HEK293 (cell line): ENCODE measurements at regions of chr17 and their contacts with region 1.

Region 1: GRCh38 chr17:76714822-76715495 is 4.2 kb upstream of the MXRA7 start:
- H3K4me3 ChIP-seq: no peak overlapping the region
- H3K27ac ChIP-seq: no peak overlapping the region
- H3K4me1 ChIP-seq: peaks cover 35% of the 10 kb centered on the region
- CTCF ChIP-seq: peak; percentile 66; the same call in 1 of the 2 replicates

Region 2: DNA sequence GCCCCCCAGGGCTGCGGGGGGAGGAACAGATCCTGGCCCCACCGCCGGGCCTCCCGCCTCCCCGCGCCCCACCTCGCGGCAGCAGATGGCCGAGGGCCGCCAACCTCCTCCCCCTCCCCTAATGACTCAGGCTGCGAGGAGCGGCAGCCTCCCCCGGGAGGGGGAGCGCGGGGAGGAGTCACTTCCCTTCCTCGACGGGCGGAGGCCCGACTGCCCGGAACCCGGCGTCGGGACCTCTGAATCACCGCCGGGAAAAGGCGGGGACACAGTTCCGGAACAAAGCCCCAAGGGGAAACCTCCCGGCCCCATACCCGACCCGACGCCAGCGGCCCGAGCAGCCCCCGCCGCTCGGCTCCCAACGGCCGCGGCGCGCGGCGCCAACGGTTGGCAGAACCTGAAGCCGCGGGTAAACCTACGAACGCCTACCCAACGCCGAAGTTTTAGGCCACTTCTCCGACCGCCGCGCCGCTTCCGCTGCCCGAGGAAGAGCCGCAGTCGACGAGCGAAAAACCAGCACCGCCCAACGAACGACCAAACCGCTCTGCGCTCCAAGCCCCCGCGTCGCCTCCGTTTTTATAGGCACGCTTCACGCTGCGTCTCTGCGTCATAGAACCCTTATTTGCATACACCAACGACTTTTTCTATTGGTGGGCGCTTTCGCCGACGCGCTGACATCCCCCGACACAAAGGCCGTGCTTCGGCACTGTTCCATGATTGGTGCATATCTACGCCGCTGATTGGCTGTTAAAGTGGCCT is 935.5 kb before region 1 on chr17:
- CTCF ChIA-PET with region 1: no interaction called
- POLR2A ChIA-PET with region 1: no interaction called
- H3K4me3 ChIP-seq: peak overlapping the region; percentile 72
- H3K27ac ChIP-seq: peak overlapping the region; percentile 94
- H3K4me1 ChIP-seq: peaks cover 17% of the 10 kb centered on the region; the same call in 1 of the 2 replicates
- CTCF ChIP-seq: no peak

Region 3: DNA sequence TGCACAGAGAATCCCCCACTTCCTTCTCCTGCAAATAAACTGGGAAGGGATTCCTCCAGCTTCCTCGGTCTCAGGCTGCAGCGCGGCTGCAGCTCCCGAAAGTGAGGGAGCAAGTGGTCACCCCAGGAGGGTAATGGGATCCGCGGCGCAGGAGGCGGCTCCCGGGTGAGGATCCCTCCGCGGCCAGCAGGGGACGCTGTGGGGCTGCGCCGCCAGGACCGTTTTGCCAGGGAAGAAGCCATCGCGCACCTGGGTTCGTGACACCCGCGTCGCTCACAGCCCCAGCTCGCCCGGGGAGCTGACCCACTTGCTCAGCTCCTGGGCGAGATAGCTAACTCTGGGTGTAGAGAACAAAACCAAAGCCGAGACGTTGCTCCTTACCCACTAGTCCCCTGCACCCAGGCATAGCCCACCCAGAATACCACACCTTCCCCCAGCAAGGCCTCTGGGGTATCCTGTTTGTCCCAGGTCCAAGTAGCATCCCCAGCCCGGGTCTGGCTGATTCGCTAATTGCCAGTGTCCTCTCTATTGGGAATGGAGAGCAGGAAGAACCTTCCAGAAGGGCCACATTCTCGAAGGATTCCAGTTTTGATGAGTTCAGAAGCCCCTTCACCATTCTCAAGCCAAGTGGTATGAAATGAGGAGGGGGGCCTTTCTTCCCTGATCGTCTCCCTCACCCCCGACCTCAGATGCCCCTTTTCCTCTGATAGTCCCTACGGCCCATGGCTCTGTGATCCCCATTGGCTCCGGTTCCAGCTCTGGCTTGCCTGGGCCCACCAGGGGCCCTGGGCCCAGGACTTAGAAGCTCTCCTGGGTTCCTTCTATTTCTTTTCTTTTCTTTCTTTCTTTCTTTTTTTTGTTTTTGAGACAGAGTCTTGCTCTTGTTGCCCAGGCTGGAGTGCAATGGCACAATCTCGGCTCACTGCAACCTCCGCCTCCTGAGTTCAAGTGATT is 191.6 kb before region 1 on chr17:
- CTCF ChIA-PET with region 1: interaction called, 26 read pairs
- POLR2A ChIA-PET with region 1: interaction called, 4 read pairs
- H3K4me3 ChIP-seq: no peak overlapping the region
- H3K27ac ChIP-seq: no peak overlapping the region
- H3K4me1 ChIP-seq: peaks cover 8% of the 10 kb centered on the region
- CTCF ChIP-seq: peak; percentile 98

Region 4: GRCh38 chr17:76540381-76541300 is 174.3 kb before region 1 on chr17:
- CTCF ChIA-PET with region 1: interaction called, 13 read pairs
- POLR2A ChIA-PET with region 1: no interaction called
- H3K4me3 ChIP-seq: peak overlapping the region; percentile 12
- H3K27ac ChIP-seq: peak overlapping the region; percentile 63
- H3K4me1 ChIP-seq: peaks cover 8% of the 10 kb centered on the region
- CTCF ChIP-seq: peak; percentile 81

Region 5: GRCh38 chr17:76687308-76688164 is 27.4 kb before region 1 on chr17:
- CTCF ChIA-PET with region 1: interaction called, 175 read pairs
- POLR2A ChIA-PET with region 1: interaction called, 22 read pairs
- H3K4me3 ChIP-seq: no peak overlapping the region
- H3K27ac ChIP-seq: no peak overlapping the region; the same call in 1 of the 2 replicates
- H3K4me1 ChIP-seq: peaks cover 11% of the 10 kb centered on the region
- CTCF ChIP-seq: no peak

Region 6: DNA sequence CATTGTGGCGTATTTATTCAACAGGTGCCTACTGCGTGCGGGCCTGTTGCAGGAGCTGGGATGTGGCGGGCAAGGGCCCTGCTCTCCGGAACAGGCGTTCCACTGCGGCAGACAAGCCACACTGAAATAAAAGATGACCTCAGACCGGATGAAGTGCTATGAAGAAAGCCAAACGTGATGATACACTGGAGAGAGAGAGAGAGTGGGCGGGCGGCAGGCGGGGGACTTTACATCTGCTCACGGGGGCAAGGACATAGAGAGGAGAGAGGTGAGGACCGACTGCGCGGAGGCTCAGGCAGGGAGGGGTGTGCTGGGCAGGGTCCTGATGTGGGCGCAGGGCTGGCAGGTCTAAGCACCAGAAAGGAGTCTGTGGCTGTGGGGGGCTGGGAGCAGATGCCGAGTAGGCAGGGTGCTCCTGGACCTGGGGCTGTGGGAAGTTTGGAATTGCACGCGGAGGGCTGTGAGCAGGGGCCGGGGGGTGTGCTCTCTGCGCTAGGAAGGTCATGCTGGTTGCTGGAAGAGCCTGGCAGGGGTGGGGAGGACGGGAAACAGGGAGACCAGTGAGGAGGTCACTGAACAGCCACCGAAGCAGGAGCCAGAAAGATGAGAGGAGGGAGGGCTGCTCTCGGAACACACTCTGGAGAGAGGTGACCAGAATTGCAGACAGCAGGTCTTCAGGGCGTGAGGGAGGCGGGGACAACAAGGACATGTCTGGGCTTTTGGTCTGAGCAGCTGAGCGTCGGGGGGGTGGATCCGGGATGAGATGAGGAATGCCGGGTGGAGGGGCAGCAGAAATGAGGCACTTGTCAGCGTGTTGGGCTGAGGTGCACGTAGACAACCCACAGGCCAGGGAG is 14.1 kb before region 1 on chr17:
- CTCF ChIA-PET with region 1: interaction called, 38 read pairs
- POLR2A ChIA-PET with region 1: interaction called, 8 read pairs
- H3K4me3 ChIP-seq: peak overlapping the region; percentile 25
- H3K27ac ChIP-seq: peak overlapping the region; percentile 56
- H3K4me1 ChIP-seq: peaks cover 40% of the 10 kb centered on the region
- CTCF ChIP-seq: no peak

Region 7: DNA sequence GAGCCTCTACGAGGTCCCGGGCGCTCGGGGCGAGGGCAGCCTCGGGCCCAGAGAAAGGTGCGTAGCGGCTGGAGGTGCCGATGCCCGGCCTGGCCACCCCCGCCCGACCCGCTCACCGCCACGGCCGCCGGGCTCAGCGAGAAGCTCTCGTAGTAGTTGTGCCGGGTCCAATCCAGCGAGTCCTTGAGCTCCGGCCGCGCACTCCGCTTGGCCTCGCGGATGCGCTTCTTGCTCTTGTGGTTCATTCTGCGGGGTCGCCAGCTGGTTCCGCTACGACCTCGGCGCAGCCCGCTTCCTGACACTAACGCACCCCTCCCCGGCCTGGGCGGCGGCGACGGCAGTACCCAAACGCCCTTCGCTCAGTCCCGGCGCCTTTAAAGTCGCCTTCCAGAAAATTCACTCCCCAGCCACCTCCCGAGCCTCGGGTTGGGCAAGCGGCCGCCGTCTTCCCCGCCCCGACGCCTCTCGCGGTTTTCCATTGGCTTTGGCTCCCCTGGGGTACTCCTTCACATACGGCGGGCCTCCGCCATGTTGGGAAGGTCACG is 11.3 kb after region 1 on chr17 and contains the start of gene JMJD6:
- CTCF ChIA-PET with region 1: interaction called, 68 read pairs
- POLR2A ChIA-PET with region 1: interaction called, 22 read pairs
- H3K4me3 ChIP-seq: peak within 1 kb of the TSS; percentile 93
- H3K27ac ChIP-seq: peak within 1 kb of the TSS; percentile 97
- H3K4me1 ChIP-seq: peaks cover 7% of the 10 kb centered on the region
- CTCF ChIP-seq: peak; percentile 7; the same call in 1 of the 2 replicates

Region 8: DNA sequence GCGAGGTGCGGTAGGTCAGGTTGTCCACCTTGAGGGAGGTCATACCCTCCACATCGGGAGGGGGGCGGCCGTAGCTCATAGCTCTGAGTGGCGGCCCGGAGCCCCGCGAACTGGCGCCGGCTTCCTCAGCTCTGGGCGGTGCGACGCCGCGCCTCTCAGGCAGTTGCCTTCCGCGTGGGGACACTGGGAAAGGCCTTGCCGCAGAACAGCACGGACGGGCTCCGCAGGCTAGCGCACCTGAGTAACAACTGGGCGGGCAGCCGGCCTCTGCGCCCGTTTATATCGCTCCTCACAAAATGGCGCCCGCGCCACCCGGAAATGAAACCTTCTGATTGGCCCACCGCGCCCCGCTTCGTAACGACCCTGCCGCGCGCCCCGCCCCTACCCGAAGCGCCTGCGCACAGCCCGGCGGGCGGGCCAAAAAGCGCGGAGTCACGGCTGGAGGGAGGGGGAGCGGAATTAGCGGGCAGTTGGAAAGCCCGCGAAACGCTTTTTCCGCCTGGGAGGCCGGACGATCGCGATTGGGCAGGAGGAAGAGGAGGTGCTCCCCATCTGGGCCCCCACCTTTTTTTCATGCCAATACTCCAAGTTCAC is 22.2 kb after region 1 on chr17 and contains the start of gene SRSF2:
- CTCF ChIA-PET with region 1: interaction called, 13 read pairs
- POLR2A ChIA-PET with region 1: interaction called, 13 read pairs
- H3K4me3 ChIP-seq: peak within 1 kb of the TSS; percentile 81
- H3K27ac ChIP-seq: peak within 1 kb of the TSS; percentile 99
- H3K4me1 ChIP-seq: peaks cover 19% of the 10 kb centered on the region
- CTCF ChIP-seq: peak; percentile 54